Left cardiac atrium (tissue), 4 donors: ENCODE measurements at regions of chr17 and their contacts with region 1.

Region 1: DNA sequence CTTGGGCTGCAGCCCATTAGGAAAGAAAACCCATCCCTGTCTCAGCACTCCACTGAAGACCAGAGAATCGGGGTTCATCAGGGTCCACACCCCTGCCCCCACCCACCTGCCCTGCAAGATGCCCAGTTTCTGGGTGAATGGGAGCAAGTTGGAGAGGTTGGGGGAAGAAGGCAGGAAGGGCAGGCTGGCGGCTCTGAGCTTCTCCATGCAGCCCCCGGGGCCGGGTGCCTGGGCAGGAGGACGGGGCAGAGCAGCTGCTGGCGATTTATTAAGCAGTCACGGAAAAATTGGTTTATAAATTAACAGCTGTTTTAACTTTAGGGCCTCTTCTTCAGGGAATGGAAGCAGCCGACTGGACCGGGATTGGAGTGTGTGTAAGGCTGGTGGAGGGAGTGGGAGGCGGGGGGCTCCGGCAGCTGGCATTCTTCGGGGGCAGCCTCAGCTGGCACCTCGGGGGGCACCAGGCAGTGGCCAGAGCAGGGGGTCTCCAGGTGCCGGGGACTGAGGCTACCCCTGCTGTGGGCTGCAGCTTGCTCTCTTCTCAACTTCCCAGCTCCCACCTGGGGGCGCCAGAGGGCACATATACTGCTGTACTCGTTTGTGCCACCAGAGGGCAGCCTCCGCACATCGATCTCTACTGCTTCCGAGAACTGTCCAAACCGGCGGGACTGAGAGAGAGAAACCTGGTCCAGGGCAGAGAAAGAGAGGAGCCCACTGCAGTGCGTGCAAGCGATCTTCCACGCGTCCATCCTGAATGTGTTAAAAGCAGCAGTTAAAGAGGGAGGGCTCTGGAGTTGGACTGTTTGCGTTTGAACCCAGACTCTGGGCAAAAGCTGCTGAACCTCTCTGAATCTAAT is 5.0 kb upstream of the PPP1R1B start:
- DNase-seq: peak; percentile 85
- ATAC-seq: peak; percentile 69 to 71

Region 2: GRCh38 chr17:39547713-39548478 is 73.9 kb before region 1 on chr17:
- intact Hi-C with region 1: loop called (anchors 1 to 2 kb)
- DNase-seq: peak; percentile 67
- ATAC-seq: peak; percentile 74 to 83

Region 3: DNA sequence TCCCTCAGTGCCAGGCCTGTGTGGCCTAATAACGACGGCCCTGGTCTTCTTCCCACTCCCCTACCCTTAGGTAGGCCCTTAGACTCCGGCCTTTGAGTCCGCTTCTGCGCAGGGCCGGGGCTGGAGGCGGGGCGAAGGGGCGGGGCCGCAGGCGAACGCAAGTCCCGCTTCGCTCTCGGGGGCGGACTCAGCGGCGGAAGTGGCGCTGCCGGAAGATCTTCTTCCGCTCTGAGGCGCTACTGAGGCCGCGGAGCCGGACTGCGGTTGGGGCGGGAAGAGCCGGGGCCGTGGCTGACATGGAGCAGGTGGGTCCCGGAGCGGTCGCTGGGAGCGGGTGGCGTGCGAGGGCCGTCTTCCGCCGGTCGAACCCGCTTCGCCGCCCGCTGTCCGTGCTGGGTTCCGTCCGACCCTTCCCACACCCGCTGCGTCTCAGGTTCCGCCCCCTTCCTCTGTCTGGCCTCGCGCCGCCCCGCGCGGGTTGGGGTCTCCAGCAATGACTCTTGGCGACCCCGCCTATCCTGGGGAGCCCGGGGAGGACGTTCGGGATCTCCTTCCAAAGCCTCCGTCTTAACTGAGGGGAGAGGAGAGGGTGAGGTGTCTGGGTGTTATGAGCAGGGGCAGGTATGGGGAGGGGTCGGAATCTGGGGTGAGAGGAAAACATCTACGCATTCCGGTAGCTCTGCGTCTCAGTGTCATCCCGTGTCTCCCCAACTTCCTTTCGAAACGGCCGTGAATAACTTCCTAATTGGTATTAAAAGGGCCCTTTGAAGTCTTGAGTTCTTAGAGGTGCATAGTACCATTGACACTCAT is 15.4 kb after region 1 on chr17 and contains the start of gene STARD3:
- intact Hi-C with region 1: no loop called
- DNase-seq: peak; percentile 95
- ATAC-seq: peak; percentile 95 to 97
- total RNA-seq, gene STARD3: 22.8 to 24.8 TPM

Region 4: GRCh38 chr17:39671651-39672521 is 50.1 kb after region 1 on chr17:
- intact Hi-C with region 1: loop called in 1 of 2 experiments (anchors 5 kb)
- DNase-seq: peak; percentile 71
- ATAC-seq: peak; percentile 12 to 28

Region 5: DNA sequence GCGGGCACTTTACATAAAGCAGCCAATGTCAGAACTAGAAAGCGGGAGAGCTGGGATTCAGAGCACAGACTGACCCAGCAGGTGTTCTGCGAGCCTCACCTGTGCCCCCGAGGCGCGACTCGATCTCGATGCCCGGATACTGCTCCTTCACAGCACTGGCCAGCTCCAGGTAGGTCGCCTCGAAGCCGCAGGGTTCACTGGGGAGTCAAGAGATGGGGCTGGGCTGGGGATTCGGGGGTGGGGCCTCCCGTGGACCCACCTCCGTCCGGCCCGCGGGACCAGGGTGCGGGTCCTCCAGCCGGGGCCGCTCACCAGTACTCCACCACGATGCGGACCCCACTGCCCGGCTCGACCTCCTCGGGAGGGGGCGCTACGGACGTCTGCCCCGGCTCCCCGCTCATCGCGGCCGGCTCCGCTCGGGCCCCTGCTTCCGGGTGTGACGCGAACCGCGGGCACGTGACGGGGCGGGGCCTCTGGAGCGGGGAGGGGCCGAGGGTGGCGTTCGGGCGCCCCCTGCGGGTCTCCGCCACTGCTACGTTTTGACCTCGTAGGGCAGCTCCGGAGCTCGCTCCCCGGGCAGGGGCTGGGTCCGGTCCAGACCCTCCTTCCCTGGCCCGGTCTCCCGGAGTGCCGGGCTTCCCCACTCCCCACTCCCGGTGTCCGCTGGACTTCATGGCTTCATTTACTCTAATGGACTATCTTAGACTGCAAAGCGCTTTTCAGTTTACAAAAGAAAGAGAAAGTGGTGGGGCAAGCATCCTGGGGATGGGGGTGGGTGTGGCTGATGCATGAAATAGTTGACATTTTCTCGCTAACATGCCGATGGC is 108.6 kb after region 1 on chr17 and contains the start of gene MIEN1:
- intact Hi-C with region 1: loop called in 1 of 2 experiments (anchors 5 kb)
- DNase-seq: peak; percentile 93
- ATAC-seq: peak; percentile 97
- total RNA-seq, gene MIEN1: 48.7 to 55.3 TPM

Region 6: DNA sequence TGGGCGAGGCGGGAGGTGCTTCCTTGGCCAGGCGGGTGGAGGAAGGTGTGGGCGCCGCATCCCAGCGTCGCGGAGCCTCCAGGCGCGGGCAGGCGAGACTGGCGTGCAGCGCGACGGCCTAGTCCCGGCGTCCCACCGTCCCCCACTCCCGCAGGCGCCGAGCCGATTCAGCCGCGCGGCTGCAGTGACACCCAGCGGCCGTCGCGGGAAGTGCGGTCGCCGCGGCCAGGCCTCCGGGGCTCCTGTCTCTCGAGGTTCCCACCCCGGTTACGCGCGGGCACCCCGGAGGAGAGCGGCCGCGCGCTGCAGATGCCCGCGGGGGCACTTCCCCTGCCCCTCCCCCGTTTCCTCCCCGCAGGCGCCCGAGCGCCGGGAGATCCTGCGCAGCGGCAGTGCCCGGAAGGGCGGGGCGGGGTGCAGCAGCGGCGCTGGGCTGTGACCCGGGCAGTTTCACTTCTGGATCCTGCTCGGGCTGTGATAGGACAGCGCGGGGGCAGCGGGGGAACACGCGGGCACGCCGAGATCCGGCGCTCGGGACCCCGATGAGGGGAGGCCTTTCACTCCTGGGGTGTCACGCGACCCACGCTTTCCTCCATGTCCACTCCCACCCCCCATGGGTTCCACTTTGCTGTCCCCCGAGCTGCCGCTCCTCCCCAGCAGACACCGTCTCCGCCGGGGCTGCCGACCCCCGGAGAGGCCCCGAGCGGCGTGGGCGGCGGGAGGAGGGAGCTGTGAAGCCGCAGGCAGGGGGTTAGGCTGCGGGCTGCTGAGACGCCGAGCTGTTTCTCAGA is 132.6 kb after region 1 on chr17:
- intact Hi-C with region 1: loop called (anchors 1 to 5 kb)
- DNase-seq: peak; percentile 95
- ATAC-seq: peak; percentile 95